H1 (cell line): ENCODE measurements at regions of chr2 and their contacts with region 1.

Region 1: GRCh38 chr2:127566576-127566975 is 31.1 kb downstream of the MYO7B start:
- DNase-seq: no peak
- H3K4me3 ChIP-seq: no peak overlapping the region
- H3K27ac ChIP-seq: no peak overlapping the region
- H3K4me1 ChIP-seq: peaks cover 0 to 3% (median 2%) of the 10 kb centered on the region in 4 experiments; a peak in 2 of 7 replicates
- H3K27me3 ChIP-seq: no peaks in the 10 kb centered on the region
- CTCF ChIP-seq: peak in 2 of 3 experiments; percentile 36 to 37; a peak in 2 of 4 replicates
- EP300 ChIP-seq: no peak
- POLR2A ChIP-seq: no peak
- RAD21 ChIP-seq: peak in 1 of 2 experiments; percentile 16; a peak in 1 of 4 replicates

Region 2: GRCh38 chr2:127551221-127551930 is 15.2 kb before region 1 on chr2:
- CTCF ChIA-PET with region 1: interaction called, 14 read pairs
- POLR2A ChIA-PET with region 1: no interaction called
- DNase-seq: no peak
- H3K4me3 ChIP-seq: no peak overlapping the region
- H3K27ac ChIP-seq: no peak overlapping the region
- H3K4me1 ChIP-seq: no peaks in the 10 kb centered on the region
- H3K27me3 ChIP-seq: no peaks in the 10 kb centered on the region; a peak in 3 of 7 replicates
- CTCF ChIP-seq: no peak
- EP300 ChIP-seq: no peak
- POLR2A ChIP-seq: no peak
- RAD21 ChIP-seq: no peak

Region 3: GRCh38 chr2:127582863-127583861 is 16.6 kb after region 1 on chr2:
- CTCF ChIA-PET with region 1: interaction called, 14 read pairs
- POLR2A ChIA-PET with region 1: interaction called, 4 read pairs
- DNase-seq: peak in 1 of 2 experiments; percentile 41
- H3K4me3 ChIP-seq: no peak overlapping the region
- H3K27ac ChIP-seq: no peak overlapping the region
- H3K4me1 ChIP-seq: peaks cover 0 to 8% (median 0%) of the 10 kb centered on the region in 4 experiments; a peak in 1 of 7 replicates
- H3K27me3 ChIP-seq: no peaks in the 10 kb centered on the region; a peak in 1 of 7 replicates
- CTCF ChIP-seq: no peak
- EP300 ChIP-seq: no peak
- POLR2A ChIP-seq: no peak
- RAD21 ChIP-seq: no peak

Region 4: DNA sequence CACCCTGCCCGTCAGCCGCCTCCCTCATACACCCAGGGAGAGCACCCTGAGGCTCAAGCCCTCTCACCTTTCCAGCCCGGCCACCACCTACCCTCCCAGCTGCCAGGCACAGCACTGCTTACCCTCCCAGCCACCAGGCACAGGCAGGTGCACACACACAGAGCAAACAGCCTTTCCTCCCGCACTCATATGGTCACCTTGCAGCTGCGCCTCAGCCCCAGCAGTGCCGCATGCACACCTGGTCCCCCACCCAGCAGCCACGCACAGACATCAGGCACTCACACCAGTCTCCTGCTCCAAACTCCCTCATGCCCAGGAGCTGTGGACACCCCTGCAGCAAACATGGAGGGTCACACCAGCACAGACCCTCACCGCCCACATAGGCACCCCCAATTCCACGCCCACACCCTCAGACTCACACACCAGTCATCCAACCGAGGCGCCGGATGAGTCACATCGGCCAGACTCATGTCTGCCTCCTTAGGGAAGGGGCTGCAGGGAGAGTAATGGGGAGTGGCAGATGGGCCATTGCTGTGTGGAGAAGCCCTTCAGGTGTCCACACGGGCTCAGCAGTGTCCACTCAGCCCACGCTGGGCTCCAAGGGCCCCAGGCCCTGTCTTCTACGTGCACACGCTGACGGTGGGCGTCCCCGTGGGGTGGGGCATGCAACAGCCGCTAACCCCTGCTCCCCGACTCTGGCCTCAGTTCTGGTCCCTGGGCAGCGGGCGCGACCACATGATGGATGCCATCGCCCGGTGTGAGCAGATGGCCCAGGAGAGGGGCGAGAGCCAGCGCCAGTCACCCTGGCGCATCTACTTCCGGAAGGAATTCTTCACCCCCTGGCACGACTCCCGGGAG is 57.0 kb after region 1 on chr2:
- CTCF ChIA-PET with region 1: no interaction called
- POLR2A ChIA-PET with region 1: no interaction called
- DNase-seq: no peak
- H3K4me3 ChIP-seq: no peak overlapping the region
- H3K27ac ChIP-seq: no peak overlapping the region
- H3K4me1 ChIP-seq: no peaks in the 10 kb centered on the region
- H3K27me3 ChIP-seq: no peaks in the 10 kb centered on the region
- CTCF ChIP-seq: no peak
- EP300 ChIP-seq: no peak
- POLR2A ChIP-seq: no peak
- RAD21 ChIP-seq: no peak

Region 5: DNA sequence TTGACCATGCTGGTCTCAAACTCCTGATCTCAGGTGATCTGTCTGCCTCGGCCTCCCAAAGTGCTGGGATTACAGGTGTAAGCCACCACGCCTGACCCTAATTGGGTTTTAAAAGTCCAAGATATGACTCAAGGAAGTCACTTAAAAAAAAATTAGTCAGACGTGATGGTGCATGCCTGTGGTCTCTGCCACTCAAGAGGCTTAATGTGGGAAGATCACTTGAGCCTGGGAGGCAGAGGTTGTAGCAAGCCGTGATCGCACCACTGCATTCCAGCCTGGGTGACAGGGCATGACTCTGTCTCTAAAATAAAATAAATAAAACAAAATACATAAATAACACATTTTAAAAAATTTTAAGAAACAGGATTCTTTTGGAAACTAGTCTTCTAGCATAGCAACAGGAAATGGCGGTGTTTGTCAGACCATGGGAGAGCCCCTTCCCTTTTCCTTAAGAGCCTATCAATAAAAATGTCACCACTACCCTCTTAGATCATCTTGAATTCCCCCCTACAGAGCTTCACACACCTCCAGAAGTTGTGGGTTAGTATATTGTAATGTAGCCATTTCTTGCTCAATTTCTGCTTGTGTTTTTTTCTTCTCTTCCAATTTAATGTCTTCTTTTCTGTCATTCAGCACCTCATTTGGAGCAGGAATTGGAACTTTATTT is 154.9 kb after region 1 on chr2:
- CTCF ChIA-PET with region 1: no interaction called
- POLR2A ChIA-PET with region 1: no interaction called
- DNase-seq: no peak
- H3K4me3 ChIP-seq: no peak overlapping the region
- H3K27ac ChIP-seq: no peak overlapping the region
- H3K4me1 ChIP-seq: no peaks in the 10 kb centered on the region
- H3K27me3 ChIP-seq: no peaks in the 10 kb centered on the region
- CTCF ChIP-seq: no peak
- EP300 ChIP-seq: no peak
- POLR2A ChIP-seq: no peak
- RAD21 ChIP-seq: no peak